ENCODE measurements at regions of chr6 and their contacts with region 1.

Region 1: GRCh38 chr6:70566751-70567382 is at the start of gene SDHAF4:
- DNase-seq: peak; percentile 95 to 98 (median 98)
- ATAC-seq: peak; percentile 100
- H3K4me3 ChIP-seq: peak within 1 kb of the TSS; percentile 87
- H3K27ac ChIP-seq: peak within 1 kb of the TSS; percentile 91
- H3K4me1 ChIP-seq: no peaks in the 10 kb centered on the region
- H3K27me3 ChIP-seq: no peaks in the 10 kb centered on the region
- total RNA-seq, gene SDHAF4: 13.1 to 18.2 (median 16.4) TPM

Region 2: GRCh38 chr6:70667711-70668498 is 101.0 kb after region 1 on chr6 and contains the start of gene SMAP1:
- intact Hi-C with region 1: loop called in 1 of 4 experiments (anchors 5 kb)
- DNase-seq: peak; percentile 97 to 99 (median 98)
- ATAC-seq: peak; percentile 99
- H3K4me3 ChIP-seq: peak within 1 kb of the TSS; percentile 68
- H3K27ac ChIP-seq: peak within 1 kb of the TSS; percentile 93
- H3K4me1 ChIP-seq: peaks cover 4% of the 10 kb centered on the region
- H3K27me3 ChIP-seq: no peaks in the 10 kb centered on the region
- total RNA-seq, gene SMAP1: 27.5 to 36.0 (median 31.5) TPM

Region 3: DNA sequence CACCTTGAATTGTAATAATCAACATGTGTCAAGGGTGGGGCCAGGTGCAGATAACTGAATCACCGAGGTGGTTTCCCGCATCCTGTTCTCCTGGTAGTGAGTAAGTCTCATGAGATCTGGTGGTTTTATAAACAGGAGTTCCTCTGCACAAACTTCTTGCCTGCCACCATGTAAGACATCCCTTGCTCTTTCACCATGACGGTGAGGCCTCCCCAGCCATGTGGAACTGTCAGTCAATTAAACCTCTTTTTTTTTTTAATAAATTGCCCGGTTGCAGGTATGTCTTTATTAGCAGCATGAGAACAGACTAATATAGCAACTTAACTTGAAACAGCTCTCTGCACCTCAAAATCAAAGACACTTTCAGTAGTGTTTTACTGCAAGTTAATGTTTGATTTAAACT is 843.3 kb after region 1 on chr6:
- intact Hi-C with region 1: no loop called
- DNase-seq: no peak
- ATAC-seq: no peak
- H3K4me3 ChIP-seq: no peak overlapping the region
- H3K27ac ChIP-seq: no peak overlapping the region
- H3K4me1 ChIP-seq: peaks cover 6% of the 10 kb centered on the region
- H3K27me3 ChIP-seq: no peaks in the 10 kb centered on the region